ENCODE measurements at regions of chr19 and their contacts with region 1.

Region 1: DNA sequence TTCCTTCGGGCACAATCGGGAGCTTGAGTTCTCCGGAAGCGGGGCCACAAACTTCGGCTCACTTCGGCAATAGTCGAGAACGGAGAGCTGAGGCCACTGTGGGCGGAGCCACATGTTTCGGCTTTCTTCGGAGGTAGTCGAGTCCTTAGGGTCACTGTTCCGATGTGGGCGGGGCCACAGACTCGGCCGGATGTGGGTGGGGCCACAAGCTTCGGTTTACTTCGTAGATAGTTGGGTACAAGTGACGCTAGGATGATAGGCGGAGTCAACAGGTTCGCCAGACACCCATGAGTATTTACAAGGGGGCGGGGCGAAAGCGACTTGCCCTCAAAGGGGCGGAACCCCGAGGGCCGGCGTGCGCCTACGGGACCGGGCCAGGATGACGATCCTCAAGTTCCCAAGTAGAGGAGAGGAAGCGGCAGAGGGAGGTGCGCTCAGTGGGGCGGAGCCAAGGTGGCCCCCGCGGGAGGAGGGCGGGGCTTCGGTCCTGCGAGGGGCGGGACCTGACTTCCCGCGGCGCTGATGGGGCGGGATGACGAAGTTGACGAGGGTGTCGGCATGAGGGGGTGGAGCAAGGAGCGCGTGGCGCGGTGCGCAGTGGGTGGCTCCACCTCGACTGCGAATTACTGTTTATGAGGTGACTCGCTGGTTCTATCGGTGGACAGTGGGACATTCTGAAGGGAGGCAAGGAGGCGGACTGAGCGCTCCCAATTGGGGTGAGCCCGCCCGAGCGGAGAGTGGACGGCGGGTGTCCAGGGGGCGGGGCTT is 539 bp upstream of the MBOAT7 start:
- DNase-seq: peak; percentile 100
- H3K4me3 ChIP-seq: peak overlapping the region; percentile 91
- H3K27ac ChIP-seq: peak overlapping the region; percentile 98
- H3K4me1 ChIP-seq: peaks cover 17% of the 10 kb centered on the region
- H3K27me3 ChIP-seq: no peaks in the 10 kb centered on the region
- CTCF ChIP-seq: no peak

Region 2: DNA sequence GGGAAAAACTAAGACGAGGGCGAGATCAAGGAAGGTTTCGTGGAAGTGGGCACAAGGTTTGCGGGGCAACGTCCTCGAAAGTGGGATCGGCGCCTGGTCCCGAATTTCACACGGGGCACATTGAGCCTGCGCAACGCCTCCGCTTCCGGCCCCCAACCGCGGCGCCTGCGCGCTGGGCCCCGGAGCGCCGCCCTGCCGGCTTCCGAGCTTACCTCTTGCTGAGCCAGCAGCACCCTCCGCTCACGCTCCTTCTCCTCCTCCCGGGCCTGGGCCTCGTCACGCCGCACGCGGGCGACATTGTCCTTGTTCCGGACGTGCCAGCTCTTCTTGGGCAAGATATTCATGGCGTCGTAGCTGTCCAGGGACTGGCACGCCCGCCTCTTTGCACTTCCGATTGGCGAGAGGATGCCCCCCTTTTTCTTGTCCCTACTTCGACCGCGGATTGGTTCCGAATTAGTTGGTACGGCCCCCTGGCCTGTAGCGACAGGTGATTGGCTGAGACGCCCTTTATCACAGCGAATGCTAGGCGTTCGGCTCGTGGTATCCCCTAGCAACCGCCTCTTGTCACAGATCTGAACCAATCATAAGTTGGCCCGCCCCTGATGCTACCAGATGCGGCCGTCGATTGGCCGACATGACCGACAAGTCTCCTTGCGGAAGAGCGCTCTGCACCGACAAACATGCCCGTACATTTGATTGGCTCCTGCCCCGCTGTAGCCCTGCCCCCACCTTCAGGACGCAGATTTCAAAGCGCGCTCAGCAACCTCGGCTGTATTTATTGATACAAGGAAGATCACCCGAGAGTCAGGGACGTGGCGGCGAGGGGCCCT is 30.4 kb before region 1 on chr19 and contains the start of gene LENG1:
- CTCF ChIA-PET with region 1: no interaction called
- POLR2A ChIA-PET with region 1: no interaction called
- intact Hi-C with region 1: loop called (anchors 2 kb)
- DNase-seq: peak; percentile 100
- H3K4me3 ChIP-seq: peak within 1 kb of the TSS; percentile 63
- H3K27ac ChIP-seq: peak within 1 kb of the TSS; percentile 93
- H3K4me1 ChIP-seq: peaks cover 9% of the 10 kb centered on the region
- H3K27me3 ChIP-seq: no peaks in the 10 kb centered on the region
- CTCF ChIP-seq: peak; percentile 53
- total RNA-seq, gene LENG1: 8.8 and 9.7 TPM in 2 replicates